Mammary epithelial cell (primary cell): ENCODE measurements at regions of chr5 and their contacts with region 1.

Region 1: DNA sequence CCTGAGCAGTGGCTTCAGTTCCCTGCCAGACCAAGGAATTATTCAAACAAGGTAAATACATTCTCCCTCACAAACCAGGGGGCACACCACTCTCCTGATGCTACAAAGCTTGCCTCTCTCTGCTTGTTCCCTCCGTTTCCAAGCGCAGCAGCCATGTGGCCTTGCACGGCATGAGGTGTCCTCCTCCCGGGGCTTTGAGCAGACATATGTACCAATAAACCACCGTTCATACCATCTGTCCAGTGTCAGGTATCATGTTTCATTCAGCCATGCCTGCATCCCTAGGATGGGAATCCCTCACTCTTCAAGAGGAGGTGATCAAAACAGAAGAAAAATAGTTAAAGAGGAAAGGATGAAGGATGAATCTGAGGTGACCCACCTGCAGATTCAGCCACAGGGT is 282.7 kb downstream of the ENC1 start:
- DNase-seq: no peak
- H3K4me3 ChIP-seq: no peak overlapping the region
- H3K27ac ChIP-seq: no peak overlapping the region
- H3K4me1 ChIP-seq: peaks cover 16% of the 10 kb centered on the region
- H3K27me3 ChIP-seq: no peaks in the 10 kb centered on the region
- CTCF ChIP-seq: no peak

Region 2: DNA sequence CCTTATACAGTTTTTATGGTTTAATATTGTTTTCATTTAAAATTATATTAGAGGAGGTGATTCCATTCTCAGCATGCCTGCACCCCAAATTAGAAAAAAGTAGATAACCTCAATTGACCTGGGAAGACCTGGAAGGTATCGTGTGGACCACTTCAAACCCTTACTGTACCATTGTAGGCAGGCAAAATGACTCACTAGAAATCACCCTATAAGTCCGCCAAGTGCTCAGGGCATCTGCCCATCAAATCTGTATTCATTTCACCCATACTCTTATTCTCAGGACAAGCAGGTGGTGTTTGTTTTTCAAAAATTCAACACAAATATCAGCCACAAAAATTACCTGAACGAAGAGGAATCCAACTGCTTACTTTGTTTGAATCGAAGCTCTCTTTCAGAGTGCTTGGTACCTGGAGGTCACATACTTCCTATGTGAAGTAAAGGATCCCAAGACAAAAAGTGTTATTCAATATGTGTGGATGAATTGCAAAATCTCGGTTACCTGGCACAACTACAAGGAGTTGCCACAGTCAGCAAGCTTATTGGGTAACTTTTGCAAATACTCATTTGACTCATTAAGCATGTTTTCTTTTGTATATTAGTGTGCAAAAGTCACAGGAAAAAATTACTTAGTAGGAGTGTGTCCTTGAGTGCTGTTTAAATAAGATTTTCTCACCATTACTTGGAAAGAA is 66.5 kb after region 1 on chr5:
- CTCF ChIA-PET with region 1: no interaction called
- dilution Hi-C with region 1: loop called (anchors 5 kb)
- in situ Hi-C with region 1: no loop called
- intact Hi-C with region 1: no loop called
- DNase-seq: peak; percentile 94
- H3K4me3 ChIP-seq: peak overlapping the region in 1 of 3 experiments; percentile 10
- H3K27ac ChIP-seq: peak overlapping the region; percentile 61
- H3K4me1 ChIP-seq: peaks cover 26% of the 10 kb centered on the region
- H3K27me3 ChIP-seq: no peaks in the 10 kb centered on the region
- CTCF ChIP-seq: no peak